ENCODE measurements at regions of chr19 and their contacts with region 1.

Region 1: DNA sequence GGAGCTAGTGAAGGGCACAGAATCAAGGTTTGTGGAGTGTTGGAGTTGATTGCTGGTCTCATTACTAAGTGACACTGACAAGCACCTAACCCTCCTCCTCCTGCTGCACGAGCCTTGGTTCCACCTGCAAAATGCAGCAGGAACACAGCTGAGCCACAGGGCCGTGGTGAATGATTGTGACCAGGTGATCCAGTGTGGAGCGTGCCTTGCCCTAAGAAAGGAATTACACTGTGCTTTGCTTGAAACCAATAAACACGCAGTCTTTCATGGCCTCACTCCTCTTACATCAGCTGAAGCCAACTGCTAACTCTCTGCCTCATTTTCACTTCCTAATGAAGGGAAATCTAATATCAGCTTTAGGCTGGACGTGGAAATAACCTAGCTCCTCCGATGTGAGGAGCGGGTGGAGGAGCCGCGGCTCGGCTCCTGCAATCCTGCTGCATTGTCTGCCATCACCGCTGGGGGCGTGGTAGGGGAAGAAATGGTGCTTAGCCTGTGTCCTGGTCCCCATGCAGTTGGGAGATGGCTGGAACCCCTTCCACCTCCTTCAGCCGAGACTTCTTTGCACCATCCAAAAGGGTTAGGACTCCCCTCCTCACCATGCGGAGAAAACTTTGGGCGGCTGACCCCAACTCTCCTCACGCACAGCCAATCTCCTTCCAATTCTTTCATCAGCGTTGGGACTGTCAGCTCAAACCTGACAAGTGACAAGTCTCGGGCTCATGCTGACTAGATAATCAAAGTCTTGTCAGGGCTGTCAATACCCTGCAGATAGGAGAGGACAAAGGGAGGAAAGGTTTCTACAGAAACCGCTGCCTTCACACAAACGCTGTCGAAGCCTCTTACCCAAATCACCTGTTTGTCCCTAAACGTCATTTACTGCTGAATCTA is 427.9 kb downstream of the ZNF536 start:
- DNase-seq: no peak

Region 2: GRCh38 chr19:31270897-31271296 is 470.8 kb after region 1 on chr19:
- intact Hi-C with region 1: no loop called
- DNase-seq: no peak

Region 3: DNA sequence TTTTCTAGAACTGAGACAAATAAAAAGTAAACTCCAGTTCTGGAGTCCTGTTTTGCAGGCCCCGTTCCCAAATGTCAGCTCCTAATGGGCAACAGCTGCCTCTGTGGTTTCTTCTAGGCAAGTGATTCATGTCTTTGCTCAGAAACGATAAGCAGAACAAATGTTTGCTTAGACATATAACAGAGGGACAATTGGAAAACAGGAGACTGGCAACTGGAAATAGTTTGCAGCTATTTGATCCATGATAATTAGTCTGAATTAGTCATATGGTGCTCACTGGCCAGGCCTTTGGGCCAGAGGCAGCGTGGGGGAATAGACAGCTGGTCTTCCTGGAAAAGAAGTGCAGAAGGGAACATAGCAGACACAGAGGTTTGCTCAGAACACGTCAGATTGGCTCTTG is 578.3 kb after region 1 on chr19:
- intact Hi-C with region 1: loop called in 1 of 2 experiments (anchors 10 kb)
- DNase-seq: peak; percentile 76

Measured in posterior vena cava (tissue), 2 donors.